AG04450 (cell line): ENCODE measurements at regions of chr2 and their contacts with region 1.

Region 1: GRCh38 chr2:166700079-166700478 is 188.2 kb upstream of the XIRP2 start:
- DNase-seq: no peak
- H3K4me3 ChIP-seq: no peak overlapping the region
- H3K27ac ChIP-seq: no peak overlapping the region
- H3K27me3 ChIP-seq: no peaks in the 10 kb centered on the region
- CTCF ChIP-seq: peak; percentile 63

Region 2: DNA sequence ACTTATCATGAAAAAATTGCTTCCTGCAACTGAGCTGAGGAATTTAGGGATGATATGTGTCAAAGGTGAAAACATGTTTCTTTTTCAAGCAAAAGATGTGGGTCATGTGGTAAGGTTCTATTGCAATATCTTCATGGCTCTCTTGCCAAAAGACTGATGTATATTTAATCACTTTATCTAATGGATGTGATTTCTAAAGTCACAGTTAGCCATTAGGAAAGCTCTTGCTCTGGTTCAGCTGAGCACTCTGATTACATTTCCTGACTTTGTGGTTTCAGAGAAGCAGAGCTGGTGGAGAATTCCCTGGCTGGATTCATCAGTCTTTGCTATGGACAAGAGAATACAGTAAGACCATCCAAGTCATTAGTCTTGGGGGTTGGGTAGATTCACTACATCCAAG is 348.8 kb before region 1 on chr2:
- CTCF ChIA-PET with region 1: no interaction called
- POLR2A ChIA-PET with region 1: no interaction called
- DNase-seq: no peak
- H3K4me3 ChIP-seq: no peak overlapping the region
- H3K27ac ChIP-seq: no peak overlapping the region
- H3K27me3 ChIP-seq: no peaks in the 10 kb centered on the region
- CTCF ChIP-seq: no peak

Region 3: DNA sequence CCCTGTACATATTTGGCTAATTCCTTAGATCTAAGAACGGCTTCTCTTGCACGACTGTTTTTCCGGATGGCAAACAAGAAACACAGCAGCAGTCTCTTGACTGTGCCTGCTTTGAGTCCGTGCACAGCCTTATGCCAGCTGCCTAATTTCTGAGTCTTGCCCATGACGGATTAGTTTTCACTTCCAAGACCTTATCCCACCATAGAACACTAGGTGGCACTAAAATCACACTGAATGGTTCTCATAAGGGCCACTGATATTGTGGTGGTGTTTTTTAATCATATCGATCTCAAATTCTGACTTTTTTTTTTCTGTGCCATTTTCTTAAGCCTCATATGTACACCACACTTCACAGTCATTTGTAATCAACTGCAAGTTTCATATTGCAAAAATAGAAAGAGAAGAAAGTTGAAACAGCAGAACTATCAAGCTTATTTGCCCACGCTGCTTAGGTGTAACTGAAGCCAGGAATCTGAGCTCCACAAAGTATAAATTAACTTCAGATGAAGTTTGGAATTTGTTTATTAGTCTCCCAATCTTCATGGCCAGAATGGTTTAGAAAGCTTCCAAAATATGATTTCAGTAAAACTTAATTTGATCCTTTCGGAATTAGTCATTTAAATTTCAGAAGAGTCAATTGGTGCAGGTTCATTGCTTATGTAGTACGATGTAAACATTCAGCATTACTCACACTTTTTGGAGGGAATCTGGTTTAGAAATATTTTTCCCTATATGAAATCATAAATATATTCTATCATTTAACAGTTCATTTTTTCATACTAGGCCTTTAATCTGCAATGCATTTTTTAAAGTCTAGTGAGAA is 160.5 kb before region 1 on chr2:
- CTCF ChIA-PET with region 1: interaction called, 10 read pairs
- POLR2A ChIA-PET with region 1: no interaction called
- DNase-seq: peak; percentile 65
- H3K4me3 ChIP-seq: peak overlapping the region; percentile 43
- H3K27ac ChIP-seq: no peak overlapping the region
- H3K27me3 ChIP-seq: no peaks in the 10 kb centered on the region
- CTCF ChIP-seq: peak; percentile 85